Activated T-helper 1 cell treated with anti-CD3 and anti-CD28 coated beads, Interleukin-12 subunit alpha, Interleukin-12 subunit beta, Interleukin-2, Interleukin-4 antibody, amounts not matched to agents 30 ng/mL and 10 ng/mL and 1 ng/mL, durations not matched to agents 14 hours and 24 hours and 36 hours (primary cell): ENCODE measurements at regions of chr3 and their contacts with region 1.

Region 1: GRCh38 chr3:122679085-122679881 is 1.4 kb upstream of the PARP14 start:
- DNase-seq: peak; percentile 77
- H3K4me3 Mint-ChIP-seq: peak overlapping the region; percentile 95
- H3K27ac Mint-ChIP-seq: peak overlapping the region; percentile 97
- H3K4me1 Mint-ChIP-seq: peaks cover 54% of the 10 kb centered on the region
- H3K27me3 Mint-ChIP-seq: no peaks in the 10 kb centered on the region

Region 2: DNA sequence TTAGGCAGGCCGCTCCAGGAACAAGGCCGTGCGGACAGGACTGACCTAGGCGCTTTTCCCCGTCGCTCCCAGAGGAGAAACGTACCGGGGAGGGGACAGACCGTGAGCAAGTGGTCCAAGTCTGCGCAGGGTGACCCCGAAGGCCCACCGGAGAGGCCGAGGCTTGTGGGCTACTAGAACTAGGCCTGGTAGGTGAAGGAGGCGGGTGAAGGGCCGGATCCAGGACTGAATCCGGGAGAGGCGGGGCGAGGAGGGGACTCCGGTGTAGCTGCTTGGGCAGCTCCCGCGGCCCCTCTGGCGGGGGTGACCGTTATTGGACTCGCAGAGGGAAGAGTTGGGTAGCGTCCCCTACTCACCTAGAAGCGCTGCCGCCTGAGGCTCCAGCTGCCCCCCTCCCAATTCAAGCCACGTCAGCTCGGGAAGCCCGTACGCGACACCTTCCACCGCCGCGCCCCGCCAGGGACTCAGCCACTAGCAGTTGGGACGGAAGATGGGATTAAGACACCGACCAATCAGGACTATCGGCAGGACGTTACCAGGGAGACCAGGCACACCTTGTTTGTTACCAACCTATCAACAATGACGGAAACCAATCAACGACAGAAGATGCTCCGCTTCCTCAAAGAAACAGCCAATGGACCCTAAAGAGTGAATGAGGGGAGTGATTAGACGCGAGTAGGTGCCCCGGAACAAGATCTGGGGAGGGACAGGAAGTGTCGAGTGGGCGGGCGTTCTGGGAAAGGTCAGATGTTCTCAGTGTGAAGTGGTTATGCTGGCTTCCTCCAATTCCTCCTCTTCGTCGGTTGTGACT is 929.8 kb before region 1 on chr3 and contains the start of gene GOLGB1:
- intact Hi-C with region 1: loop called (anchors 2 kb)
- DNase-seq: peak; percentile 89
- H3K4me3 Mint-ChIP-seq: no peak within 1 kb of the TSS
- H3K27ac Mint-ChIP-seq: no peak within 1 kb of the TSS
- H3K4me1 Mint-ChIP-seq: peaks cover 5% of the 10 kb centered on the region
- H3K27me3 Mint-ChIP-seq: peaks cover 12% of the 10 kb centered on the region
- total RNA-seq, gene GOLGB1: 23.2 and 23.6 TPM in 2 replicates

Region 3: GRCh38 chr3:122151480-122151879 is 527.8 kb before region 1 on chr3:
- intact Hi-C with region 1: no loop called
- DNase-seq: no peak
- H3K4me3 Mint-ChIP-seq: no peak overlapping the region
- H3K27ac Mint-ChIP-seq: no peak overlapping the region
- H3K4me1 Mint-ChIP-seq: peaks cover 16% of the 10 kb centered on the region
- H3K27me3 Mint-ChIP-seq: no peaks in the 10 kb centered on the region

Region 4: DNA sequence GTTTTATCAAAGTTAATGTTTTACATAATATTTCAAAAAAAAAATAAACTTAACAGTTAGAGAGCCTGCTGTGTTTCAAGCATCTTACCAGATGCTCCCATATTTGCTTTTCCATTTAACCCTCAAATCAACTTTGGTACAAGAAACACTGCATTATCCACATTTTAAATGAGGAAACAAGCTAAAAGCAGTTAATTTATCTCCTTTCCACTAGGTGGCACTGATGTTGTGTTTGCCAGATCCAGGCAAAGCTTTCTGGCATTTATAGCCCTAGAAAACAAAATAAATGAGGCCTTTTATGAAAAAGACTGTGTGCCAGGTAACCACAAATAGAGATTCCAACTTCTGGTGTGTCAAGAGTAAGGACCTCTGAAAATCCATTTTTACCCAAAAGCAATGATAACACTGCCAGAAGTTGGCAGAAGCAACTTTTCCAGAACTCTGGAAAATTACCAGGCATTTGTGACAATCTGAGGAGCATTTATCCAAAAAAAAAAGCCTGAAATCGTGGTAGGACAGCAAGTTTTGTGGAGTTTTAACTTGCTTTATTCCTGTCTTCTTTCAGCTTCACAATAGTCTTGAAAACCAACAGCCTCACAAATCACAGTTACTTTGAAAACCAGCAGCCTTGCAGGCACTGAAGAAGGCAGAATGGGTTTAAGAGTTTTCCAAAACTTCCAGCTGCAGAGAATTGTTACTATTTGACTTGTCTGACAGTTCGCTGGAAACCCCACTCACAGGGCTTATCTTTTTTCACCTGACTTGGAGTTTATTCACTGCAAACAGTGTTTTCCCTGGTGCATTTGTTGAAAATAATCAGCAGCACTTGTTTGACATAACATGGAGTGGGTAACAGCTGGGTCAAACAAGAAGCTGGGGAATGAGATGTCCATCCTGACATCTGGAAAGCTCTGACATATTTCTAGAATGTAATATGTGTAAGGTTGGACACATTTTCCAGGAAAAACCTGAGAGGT is 286.1 kb before region 1 on chr3:
- intact Hi-C with region 1: loop called (anchors 1 kb)
- DNase-seq: no peak
- H3K4me3 Mint-ChIP-seq: no peak overlapping the region
- H3K27ac Mint-ChIP-seq: no peak overlapping the region
- H3K4me1 Mint-ChIP-seq: peaks cover 46% of the 10 kb centered on the region
- H3K27me3 Mint-ChIP-seq: no peaks in the 10 kb centered on the region

Region 5: GRCh38 chr3:122458992-122459391 is 220.3 kb before region 1 on chr3:
- intact Hi-C with region 1: loop called (anchors 2 kb)
- DNase-seq: no peak
- H3K4me3 Mint-ChIP-seq: no peak overlapping the region
- H3K27ac Mint-ChIP-seq: no peak overlapping the region
- H3K4me1 Mint-ChIP-seq: no peaks in the 10 kb centered on the region
- H3K27me3 Mint-ChIP-seq: no peaks in the 10 kb centered on the region

Region 6: DNA sequence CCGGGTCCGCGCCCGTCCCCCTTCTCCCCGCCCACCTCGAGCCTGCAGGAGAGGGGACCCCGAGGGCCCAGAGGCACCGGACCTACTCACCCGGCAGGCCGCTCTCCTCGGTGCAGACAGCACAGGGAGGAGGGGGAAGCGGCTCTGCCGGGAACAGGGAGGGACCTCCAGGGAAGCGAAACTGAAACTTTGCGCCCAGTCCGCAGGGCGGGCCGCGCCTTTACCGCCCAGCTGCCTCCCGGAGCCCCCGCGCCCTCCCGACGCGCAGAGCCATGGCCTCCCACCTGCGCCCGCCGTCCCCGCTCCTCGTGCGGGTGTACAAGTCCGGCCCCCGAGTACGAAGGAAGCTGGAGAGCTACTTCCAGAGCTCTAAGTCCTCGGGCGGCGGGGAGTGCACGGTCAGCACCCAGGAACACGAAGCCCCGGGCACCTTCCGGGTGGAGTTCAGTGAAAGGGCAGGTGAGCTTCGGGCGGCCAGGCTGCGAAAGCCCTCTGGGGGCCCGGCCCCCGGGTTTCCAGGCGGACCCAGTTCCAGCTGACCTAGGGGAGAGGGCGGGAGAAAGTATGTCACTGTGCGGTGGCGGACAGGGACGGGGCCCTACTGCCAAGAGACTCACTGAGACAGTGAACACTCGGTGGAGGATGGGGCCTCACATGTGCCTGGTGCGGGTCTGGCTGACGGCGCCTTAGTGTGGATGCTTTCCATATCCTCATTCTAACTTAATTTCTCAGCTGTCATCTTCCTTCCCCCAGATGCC is 114.9 kb before region 1 on chr3 and contains the starts of genes DTX3L and PARP9:
- intact Hi-C with region 1: loop called (anchors 1 kb)
- DNase-seq: peak; percentile 87
- H3K4me3 Mint-ChIP-seq: peak within 1 kb of the TSS; percentile 99
- H3K27ac Mint-ChIP-seq: peak within 1 kb of the TSS; percentile 98
- H3K4me1 Mint-ChIP-seq: peaks cover 79% of the 10 kb centered on the region
- H3K27me3 Mint-ChIP-seq: no peaks in the 10 kb centered on the region
- total RNA-seq, gene DTX3L: 40.8 and 44.5 TPM in 2 replicates
- total RNA-seq, gene PARP9: 45.0 and 47.3 TPM in 2 replicates

Region 7: GRCh38 chr3:122609798-122610559 is 69.3 kb before region 1 on chr3:
- intact Hi-C with region 1: loop called (anchors 1 kb)
- DNase-seq: peak; percentile 31
- H3K4me3 Mint-ChIP-seq: peak overlapping the region; percentile 58
- H3K27ac Mint-ChIP-seq: peak overlapping the region; percentile 89
- H3K4me1 Mint-ChIP-seq: peaks cover 20% of the 10 kb centered on the region
- H3K27me3 Mint-ChIP-seq: no peaks in the 10 kb centered on the region

Region 8: DNA sequence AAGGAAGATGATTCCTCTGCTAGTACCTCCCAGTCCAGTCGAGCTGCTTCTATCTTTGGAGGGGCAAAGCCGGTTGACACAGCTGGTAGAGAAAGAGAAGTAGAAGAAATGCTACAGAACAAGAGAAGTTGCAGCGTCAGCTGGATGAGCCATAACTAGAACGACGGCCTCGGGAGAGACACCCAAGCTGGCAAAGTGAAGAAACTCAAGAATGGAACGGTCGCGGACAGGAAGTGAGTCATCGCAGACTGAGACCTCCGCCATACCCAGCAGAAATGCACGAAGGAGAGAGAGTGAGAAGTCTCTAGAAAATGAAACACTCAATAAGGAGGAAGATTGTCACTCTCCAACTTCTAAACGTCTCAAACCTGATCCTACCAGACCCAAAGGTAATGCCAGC is 17.6 kb before region 1 on chr3:
- intact Hi-C with region 1: no loop called
- DNase-seq: no peak
- H3K4me3 Mint-ChIP-seq: no peak overlapping the region
- H3K27ac Mint-ChIP-seq: no peak overlapping the region
- H3K4me1 Mint-ChIP-seq: no peaks in the 10 kb centered on the region
- H3K27me3 Mint-ChIP-seq: peaks cover 17% of the 10 kb centered on the region